Activated B cell treated with CpG ODN at 0.5 μM for 24 hours (primary cell): ENCODE measurements at regions of chr5 and their contacts with region 1.

Region 1: GRCh38 chr5:127030259-127031146 is at the start of gene MARCHF3:
- DNase-seq: peak; percentile 98
- ATAC-seq: peak; percentile 93
- H3K4me3 Mint-ChIP-seq: peak within 1 kb of the TSS; percentile 94
- H3K27ac Mint-ChIP-seq: peak within 1 kb of the TSS; percentile 90
- H3K4me1 Mint-ChIP-seq: peaks cover 45% of the 10 kb centered on the region
- H3K27me3 Mint-ChIP-seq: no peaks in the 10 kb centered on the region
- CTCF ChIP-seq: no peak
- total RNA-seq, gene MARCHF3: 21.9 and 22.8 TPM in 2 replicates

Region 2: GRCh38 chr5:126235628-126236027 is 794.9 kb before region 1 on chr5:
- CTCF ChIA-PET with region 1: no interaction called
- POLR2A ChIA-PET with region 1: no interaction called
- intact Hi-C with region 1: no loop called
- DNase-seq: no peak
- ATAC-seq: no peak
- H3K4me3 Mint-ChIP-seq: no peak overlapping the region
- H3K27ac Mint-ChIP-seq: no peak overlapping the region
- H3K4me1 Mint-ChIP-seq: no peaks in the 10 kb centered on the region
- H3K27me3 Mint-ChIP-seq: peaks cover 2% of the 10 kb centered on the region
- CTCF ChIP-seq: no peak

Region 3: DNA sequence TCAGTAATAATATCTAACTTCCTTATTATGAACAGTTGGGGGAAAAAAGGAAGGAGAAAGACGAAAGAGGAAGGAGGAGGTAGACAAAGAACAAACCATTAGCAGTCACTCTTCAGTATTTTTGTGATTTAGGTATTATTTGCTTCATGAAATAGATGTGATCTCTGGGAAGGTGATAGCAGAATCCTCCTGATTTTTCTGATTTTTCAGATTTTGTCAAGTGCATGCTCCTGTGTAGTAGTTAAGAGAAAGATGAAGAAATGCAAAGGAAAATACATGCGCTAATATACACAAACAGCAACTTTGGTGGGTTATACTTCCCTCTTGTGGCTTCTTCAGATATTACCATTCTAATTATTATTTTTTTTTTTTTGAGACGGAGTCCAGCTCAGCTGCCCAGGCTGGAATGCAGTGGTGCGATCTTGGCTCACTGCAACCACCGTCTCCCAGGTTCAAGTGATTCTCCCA is 221.9 kb before region 1 on chr5:
- CTCF ChIA-PET with region 1: no interaction called
- POLR2A ChIA-PET with region 1: interaction called, 7 read pairs
- intact Hi-C with region 1: loop called (anchors 1 kb)
- DNase-seq: no peak
- ATAC-seq: peak; percentile 66
- H3K4me3 Mint-ChIP-seq: peak overlapping the region; percentile 66
- H3K27ac Mint-ChIP-seq: peak overlapping the region; percentile 81
- H3K4me1 Mint-ChIP-seq: peaks cover 63% of the 10 kb centered on the region
- H3K27me3 Mint-ChIP-seq: no peaks in the 10 kb centered on the region
- CTCF ChIP-seq: peak; percentile 35

Region 4: DNA sequence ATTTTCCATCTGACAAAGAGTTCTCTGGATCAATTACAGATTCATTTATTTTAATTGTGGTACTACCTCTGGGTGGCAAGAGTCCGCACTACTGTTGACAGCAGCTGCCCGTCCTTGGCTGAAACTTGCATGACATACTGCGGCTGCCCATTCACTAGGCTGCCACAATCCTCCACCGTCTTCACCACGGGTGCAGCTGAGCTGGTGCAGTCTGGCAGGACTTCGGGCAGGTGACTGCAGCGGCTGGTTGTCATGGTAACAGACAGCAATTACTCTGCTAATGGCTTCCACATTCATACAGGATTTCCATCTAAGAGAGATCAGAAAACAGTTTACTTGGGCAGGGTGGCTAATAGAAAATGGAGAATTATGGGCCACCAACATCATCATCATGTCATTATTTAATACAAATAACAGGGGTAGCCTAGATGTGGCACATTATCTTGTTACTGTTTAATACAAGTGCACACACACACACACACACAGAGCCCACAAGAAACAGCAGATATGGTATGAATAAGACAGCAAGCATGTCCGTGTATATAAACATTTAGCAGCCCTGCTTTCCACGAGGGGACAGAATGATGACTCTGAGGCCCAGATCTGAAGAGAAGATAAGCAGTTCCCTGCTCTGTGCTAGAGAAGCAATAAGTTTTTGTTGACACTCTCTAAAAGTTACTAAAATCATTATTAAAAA is 112.4 kb before region 1 on chr5:
- CTCF ChIA-PET with region 1: no interaction called
- POLR2A ChIA-PET with region 1: no interaction called
- intact Hi-C with region 1: loop called (anchors 1 kb)
- DNase-seq: no peak
- ATAC-seq: no peak
- H3K4me3 Mint-ChIP-seq: no peak overlapping the region
- H3K27ac Mint-ChIP-seq: no peak overlapping the region
- H3K4me1 Mint-ChIP-seq: peaks cover 16% of the 10 kb centered on the region
- H3K27me3 Mint-ChIP-seq: no peaks in the 10 kb centered on the region
- CTCF ChIP-seq: no peak

Region 5: GRCh38 chr5:127011961-127012644 is 18.4 kb before region 1 on chr5:
- CTCF ChIA-PET with region 1: interaction called, 9 read pairs
- POLR2A ChIA-PET with region 1: interaction called, 11 read pairs
- intact Hi-C with region 1: loop called (anchors 1 kb)
- DNase-seq: no peak
- ATAC-seq: peak; percentile 68
- H3K4me3 Mint-ChIP-seq: peak overlapping the region; percentile 28
- H3K27ac Mint-ChIP-seq: peak overlapping the region; percentile 59
- H3K4me1 Mint-ChIP-seq: peaks cover 68% of the 10 kb centered on the region
- H3K27me3 Mint-ChIP-seq: no peaks in the 10 kb centered on the region
- CTCF ChIP-seq: no peak

Region 6: GRCh38 chr5:127313847-127314473 is 283.5 kb after region 1 on chr5:
- CTCF ChIA-PET with region 1: no interaction called
- POLR2A ChIA-PET with region 1: no interaction called
- intact Hi-C with region 1: loop called (anchors 2 kb)
- DNase-seq: peak; percentile 50
- ATAC-seq: peak; percentile 75
- H3K4me3 Mint-ChIP-seq: no peak overlapping the region
- H3K27ac Mint-ChIP-seq: no peak overlapping the region
- H3K4me1 Mint-ChIP-seq: peaks cover 2% of the 10 kb centered on the region
- H3K27me3 Mint-ChIP-seq: peaks cover 8% of the 10 kb centered on the region
- CTCF ChIP-seq: no peak

Region 7: GRCh38 chr5:127801751-127802476 is 771.4 kb after region 1 on chr5:
- CTCF ChIA-PET with region 1: no interaction called
- POLR2A ChIA-PET with region 1: no interaction called
- intact Hi-C with region 1: no loop called
- DNase-seq: no peak
- ATAC-seq: no peak
- H3K4me3 Mint-ChIP-seq: no peak overlapping the region
- H3K27ac Mint-ChIP-seq: no peak overlapping the region
- H3K4me1 Mint-ChIP-seq: no peaks in the 10 kb centered on the region
- H3K27me3 Mint-ChIP-seq: peaks cover 3% of the 10 kb centered on the region
- CTCF ChIP-seq: no peak

Region 8: GRCh38 chr5:127941646-127942045 is 911.1 kb after region 1 on chr5:
- CTCF ChIA-PET with region 1: no interaction called
- POLR2A ChIA-PET with region 1: no interaction called
- intact Hi-C with region 1: no loop called
- DNase-seq: no peak
- ATAC-seq: no peak
- H3K4me3 Mint-ChIP-seq: no peak overlapping the region
- H3K27ac Mint-ChIP-seq: no peak overlapping the region
- H3K4me1 Mint-ChIP-seq: no peaks in the 10 kb centered on the region
- H3K27me3 Mint-ChIP-seq: no peaks in the 10 kb centered on the region
- CTCF ChIP-seq: no peak